HCT116 (cell line): ENCODE measurements at regions of chr10 and their contacts with region 1.

Region 1: DNA sequence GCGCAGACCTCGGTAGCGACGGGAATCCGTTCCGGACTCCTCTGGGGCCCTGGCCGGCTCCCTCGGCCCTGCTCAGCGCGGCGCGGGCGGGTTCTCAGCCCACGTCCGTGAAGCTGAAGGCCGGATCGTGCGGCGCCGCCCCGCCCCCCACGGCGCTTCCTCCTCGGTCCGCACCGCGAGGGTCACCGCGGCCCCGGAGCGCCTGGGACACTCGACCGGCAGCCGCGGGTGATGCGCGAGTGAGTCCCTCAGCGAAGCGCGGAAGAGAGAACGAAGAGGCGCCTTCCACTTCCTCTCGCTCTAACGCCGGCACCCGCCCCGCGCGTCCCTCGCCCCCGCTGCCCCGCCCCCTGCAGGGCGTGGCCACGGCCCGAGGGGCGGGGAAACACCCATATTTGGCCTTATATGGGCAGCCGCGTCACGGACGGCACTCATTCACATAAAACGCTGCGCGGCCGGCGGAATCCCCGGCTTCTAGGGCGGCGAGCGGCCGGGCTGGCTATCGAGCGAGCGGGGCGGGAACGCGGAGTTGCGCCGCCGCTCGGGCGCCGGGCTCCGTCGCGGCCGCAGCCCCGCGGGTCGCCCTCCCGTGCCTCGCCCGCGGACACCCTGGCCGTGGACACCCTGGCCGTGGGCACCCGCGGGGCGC is at the start of gene DUSP5:
- DNase-seq: peak; percentile 93
- ATAC-seq: peak; percentile 64
- H3K4me3 ChIP-seq: peak within 1 kb of the TSS; percentile 90 to 92
- H3K27ac ChIP-seq: peak within 1 kb of the TSS; percentile 65
- H3K4me1 ChIP-seq: peaks cover 41 to 72% of the 10 kb centered on the region in 2 experiments
- H3K27me3 ChIP-seq: no peaks in the 10 kb centered on the region
- CTCF ChIP-seq: no peak
- POLR2A ChIP-seq: peak; percentile 98
- RAD21 ChIP-seq: no peak
- total RNA-seq, gene DUSP5: 137 TPM

Region 2: GRCh38 chr10:110311357-110311949 is 186.1 kb before region 1 on chr10:
- CTCF ChIA-PET with region 1: interaction called, 8 read pairs
- POLR2A ChIA-PET with region 1: interaction called, 6 read pairs
- RAD21 ChIA-PET with region 1: no interaction called
- intact Hi-C with region 1: loop called (anchors 1 kb)
- DNase-seq: peak; percentile 80
- ATAC-seq: peak; percentile 90
- H3K4me3 ChIP-seq: no peak overlapping the region
- H3K27ac ChIP-seq: no peak overlapping the region
- H3K4me1 ChIP-seq: peaks cover 2 to 20% of the 10 kb centered on the region in 2 experiments; a peak in 2 of 4 replicates
- H3K27me3 ChIP-seq: no peaks in the 10 kb centered on the region
- CTCF ChIP-seq: peak; percentile 73 to 96 (median 90)
- POLR2A ChIP-seq: no peak
- RAD21 ChIP-seq: peak; percentile 99

Region 3: DNA sequence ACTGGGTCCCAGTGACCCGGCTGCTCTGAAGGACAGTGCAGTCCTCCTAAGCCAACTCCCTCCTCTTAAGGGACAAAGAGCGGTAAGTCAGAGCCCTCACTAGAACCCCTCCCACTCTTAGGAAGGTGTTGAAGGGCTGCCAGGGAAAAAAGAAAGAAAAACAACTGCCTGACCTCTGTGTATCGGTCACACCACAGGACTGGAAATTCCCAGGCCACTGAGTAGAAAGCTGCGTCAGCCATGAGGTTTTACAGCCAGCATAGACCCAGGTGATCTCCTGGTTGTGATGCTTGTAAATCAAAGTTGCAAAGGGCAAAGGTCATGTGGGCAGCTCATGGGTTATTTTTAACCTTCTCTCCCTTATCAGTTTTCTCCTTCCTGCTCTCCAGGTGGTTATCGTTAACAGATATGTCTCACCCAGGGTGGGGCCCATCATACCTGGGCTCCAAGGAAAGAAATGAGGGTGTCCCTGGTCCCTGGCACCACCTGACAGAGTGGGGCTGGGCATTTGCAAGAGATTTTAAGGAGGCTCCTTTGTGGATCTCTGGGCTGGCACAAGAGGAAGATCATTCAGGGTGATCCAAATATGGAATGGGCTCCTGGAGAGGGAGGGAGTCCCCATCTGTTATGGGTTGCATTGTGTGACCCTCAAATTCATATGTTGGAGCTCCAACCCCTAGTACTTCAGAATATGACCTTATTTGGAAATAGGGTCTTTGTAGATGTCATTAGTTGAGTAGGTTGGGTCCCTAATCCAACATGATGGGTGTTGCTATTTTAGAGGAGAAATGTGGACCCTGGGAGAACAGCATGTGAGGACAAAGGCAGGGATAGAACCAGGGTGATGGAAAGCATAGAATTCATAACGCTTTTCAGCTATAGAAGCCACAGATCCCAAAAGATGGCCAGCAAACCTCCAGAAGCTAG is 101.6 kb before region 1 on chr10:
- CTCF ChIA-PET with region 1: no interaction called
- POLR2A ChIA-PET with region 1: interaction called, 438 read pairs
- RAD21 ChIA-PET with region 1: no interaction called
- intact Hi-C with region 1: loop called (anchors 1 kb)
- DNase-seq: peak; percentile 96
- ATAC-seq: peak; percentile 58
- H3K4me3 ChIP-seq: peak overlapping the region in 1 of 2 experiments; percentile 19; a peak in 2 of 4 replicates
- H3K27ac ChIP-seq: peak overlapping the region; percentile 71
- H3K4me1 ChIP-seq: peaks cover 69 to 85% of the 10 kb centered on the region in 2 experiments
- H3K27me3 ChIP-seq: no peaks in the 10 kb centered on the region
- CTCF ChIP-seq: no peak
- POLR2A ChIP-seq: no peak
- RAD21 ChIP-seq: no peak

Region 4: GRCh38 chr10:110429289-110429688 is 68.3 kb before region 1 on chr10:
- CTCF ChIA-PET with region 1: no interaction called
- POLR2A ChIA-PET with region 1: interaction called, 10 read pairs
- RAD21 ChIA-PET with region 1: no interaction called
- intact Hi-C with region 1: no loop called
- DNase-seq: no peak
- ATAC-seq: peak; percentile 33; the same call in 1 of the 2 replicates
- H3K4me3 ChIP-seq: no peak overlapping the region
- H3K27ac ChIP-seq: no peak overlapping the region
- H3K4me1 ChIP-seq: peaks cover 32 to 77% of the 10 kb centered on the region in 2 experiments
- H3K27me3 ChIP-seq: no peaks in the 10 kb centered on the region
- CTCF ChIP-seq: no peak
- POLR2A ChIP-seq: no peak
- RAD21 ChIP-seq: no peak

Region 5: GRCh38 chr10:110530131-110530831 is 32.7 kb after region 1 on chr10:
- CTCF ChIA-PET with region 1: no interaction called
- POLR2A ChIA-PET with region 1: interaction called, 3 read pairs
- RAD21 ChIA-PET with region 1: interaction called, 3 read pairs
- intact Hi-C with region 1: loop called (anchors 2 kb)
- DNase-seq: peak; percentile 73
- ATAC-seq: peak; percentile 85
- H3K4me3 ChIP-seq: peak overlapping the region; percentile 59
- H3K27ac ChIP-seq: peak overlapping the region; percentile 76
- H3K4me1 ChIP-seq: peaks cover 64 to 84% of the 10 kb centered on the region in 2 experiments
- H3K27me3 ChIP-seq: no peaks in the 10 kb centered on the region
- CTCF ChIP-seq: no peak
- POLR2A ChIP-seq: no peak
- RAD21 ChIP-seq: no peak

Region 6: DNA sequence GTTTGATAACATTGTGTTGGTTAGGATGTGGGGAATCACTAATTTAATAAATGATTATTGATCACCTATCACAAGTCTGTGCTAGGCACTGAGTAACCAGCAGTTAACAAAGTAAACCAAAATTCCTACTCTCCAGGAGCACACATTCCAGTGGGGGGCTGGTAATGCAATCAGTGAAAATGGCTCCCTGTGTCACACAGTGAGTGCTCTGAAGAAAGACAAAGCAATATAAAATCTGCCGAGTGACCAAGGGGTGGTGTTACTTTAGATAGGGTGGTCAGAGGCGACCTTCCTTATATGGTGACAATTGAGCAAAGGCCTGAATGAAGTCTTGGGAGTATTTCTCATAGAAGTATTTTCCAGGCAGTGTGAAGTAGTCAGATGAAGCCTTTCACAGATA is 56.3 kb after region 1 on chr10:
- CTCF ChIA-PET with region 1: no interaction called
- POLR2A ChIA-PET with region 1: no interaction called
- RAD21 ChIA-PET with region 1: no interaction called
- intact Hi-C with region 1: no loop called
- DNase-seq: no peak
- ATAC-seq: no peak
- H3K4me3 ChIP-seq: no peak overlapping the region
- H3K27ac ChIP-seq: no peak overlapping the region
- H3K4me1 ChIP-seq: peaks cover 0 to 3% of the 10 kb centered on the region in 2 experiments; a peak in 1 of 4 replicates
- H3K27me3 ChIP-seq: no peaks in the 10 kb centered on the region
- CTCF ChIP-seq: no peak
- POLR2A ChIP-seq: no peak
- RAD21 ChIP-seq: no peak

Region 7: GRCh38 chr10:110567201-110568054 is 69.9 kb after region 1 on chr10 and contains the start of gene SMC3:
- CTCF ChIA-PET with region 1: no interaction called
- POLR2A ChIA-PET with region 1: no interaction called
- RAD21 ChIA-PET with region 1: no interaction called
- intact Hi-C with region 1: loop called (anchors 5 kb)
- DNase-seq: peak; percentile 96
- ATAC-seq: peak; percentile 86
- H3K4me3 ChIP-seq: peak within 1 kb of the TSS; percentile 70 to 87
- H3K27ac ChIP-seq: peak within 1 kb of the TSS; percentile 72
- H3K4me1 ChIP-seq: peaks cover 8 to 21% of the 10 kb centered on the region in 2 experiments; a peak in 3 of 4 replicates
- H3K27me3 ChIP-seq: no peaks in the 10 kb centered on the region
- CTCF ChIP-seq: no peak
- POLR2A ChIP-seq: peak; percentile 98
- RAD21 ChIP-seq: no peak
- total RNA-seq, gene SMC3: 64.3 TPM